Activated naive CD4-positive, alpha-beta T cell treated with anti-CD3 and anti-CD28 coated beads, Interleukin-2, amount 10 ng/mL, durations not matched to agents 7 days and 5 days (primary cell): ENCODE measurements at regions of chr2 and their contacts with region 1.

Region 1: GRCh38 chr2:68295516-68295915 is 24.2 kb downstream of the CNRIP1 start:
- DNase-seq: no peak
- H3K4me3 Mint-ChIP-seq: no peak overlapping the region
- H3K27ac Mint-ChIP-seq: no peak overlapping the region
- H3K4me1 Mint-ChIP-seq: no peaks in the 10 kb centered on the region
- H3K27me3 Mint-ChIP-seq: peaks cover 5% of the 10 kb centered on the region

Region 2: GRCh38 chr2:68282811-68283418 is 12.6 kb before region 1 on chr2:
- CTCF ChIA-PET with region 1: interaction called, 28 read pairs
- DNase-seq: peak; percentile 27
- H3K4me3 Mint-ChIP-seq: no peak overlapping the region
- H3K27ac Mint-ChIP-seq: no peak overlapping the region
- H3K4me1 Mint-ChIP-seq: no peaks in the 10 kb centered on the region
- H3K27me3 Mint-ChIP-seq: peaks cover 24% of the 10 kb centered on the region

Region 3: DNA sequence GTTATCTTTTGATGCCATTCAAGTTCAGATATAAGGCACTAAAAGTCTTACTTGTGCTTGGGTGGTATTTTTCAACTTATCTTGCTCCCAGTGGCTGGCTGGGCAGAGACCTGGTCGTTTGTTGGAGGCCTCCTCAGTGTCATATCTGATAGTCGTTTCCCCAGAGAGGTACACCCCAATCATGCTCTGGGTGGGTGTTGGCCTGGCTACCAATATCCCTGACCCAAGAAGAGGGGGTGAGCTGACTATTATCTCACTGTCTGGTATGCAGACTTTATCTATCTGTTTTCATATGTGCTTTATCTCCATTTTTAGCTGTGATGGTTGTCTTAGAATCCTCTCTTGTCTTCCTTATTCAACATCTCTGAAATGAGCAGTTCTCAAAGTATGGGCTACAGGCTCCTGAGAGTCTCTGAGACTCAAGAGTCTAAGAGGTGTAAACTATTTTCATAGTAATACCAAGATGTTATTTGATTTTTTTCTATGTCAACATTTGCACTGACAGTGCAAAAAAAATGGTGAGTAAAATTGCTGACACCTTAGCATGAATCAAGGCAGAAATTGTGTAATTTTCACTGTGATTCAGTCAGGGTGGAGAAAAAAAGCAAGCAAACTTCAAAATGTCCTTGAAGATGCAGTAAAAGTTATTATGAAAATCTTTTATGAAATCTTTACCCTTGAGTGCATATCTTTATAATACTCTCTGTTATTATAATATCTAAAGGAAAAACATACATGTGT is 57.3 kb after region 1 on chr2:
- CTCF ChIA-PET with region 1: no interaction called
- DNase-seq: no peak
- H3K4me3 Mint-ChIP-seq: no peak overlapping the region
- H3K27ac Mint-ChIP-seq: no peak overlapping the region
- H3K4me1 Mint-ChIP-seq: no peaks in the 10 kb centered on the region
- H3K27me3 Mint-ChIP-seq: peaks cover 13% of the 10 kb centered on the region